Dendritic cell treated with granulocyte-macrophage colony-stimulating factor and Interleukin-4, amounts not matched to agents 40 ng/mL and 50 ng/mL, for 4 days (primary cell): ENCODE measurements at regions of chr17 and their contacts with region 1.

Region 1: GRCh38 chr17:7887482-7888183 is 956 bp upstream of the CHD3 start:
- H3K4me3 Mint-ChIP-seq: no peak overlapping the region
- H3K27ac Mint-ChIP-seq: no peak overlapping the region
- H3K4me1 Mint-ChIP-seq: peaks cover 5% of the 10 kb centered on the region
- H3K27me3 Mint-ChIP-seq: no peaks in the 10 kb centered on the region

Region 2: GRCh38 chr17:7862692-7863437 is 24.8 kb before region 1 on chr17:
- intact Hi-C with region 1: loop called (anchors 2 kb)
- H3K4me3 Mint-ChIP-seq: no peak overlapping the region
- H3K27ac Mint-ChIP-seq: no peak overlapping the region
- H3K4me1 Mint-ChIP-seq: peaks cover 19% of the 10 kb centered on the region
- H3K27me3 Mint-ChIP-seq: no peaks in the 10 kb centered on the region

Region 3: GRCh38 chr17:7931709-7932482 is 44.3 kb after region 1 on chr17 and contains the starts of genes CNTROB and TRAPPC1:
- intact Hi-C with region 1: loop called (anchors 5 kb)
- H3K4me3 Mint-ChIP-seq: peak within 1 kb of the TSS; percentile 91
- H3K27ac Mint-ChIP-seq: peak within 1 kb of the TSS; percentile 91
- H3K4me1 Mint-ChIP-seq: peaks cover 59% of the 10 kb centered on the region
- H3K27me3 Mint-ChIP-seq: no peaks in the 10 kb centered on the region